Spleen (tissue), 13 donors: ENCODE measurements at regions of chr7 and their contacts with region 1.

Region 1: DNA sequence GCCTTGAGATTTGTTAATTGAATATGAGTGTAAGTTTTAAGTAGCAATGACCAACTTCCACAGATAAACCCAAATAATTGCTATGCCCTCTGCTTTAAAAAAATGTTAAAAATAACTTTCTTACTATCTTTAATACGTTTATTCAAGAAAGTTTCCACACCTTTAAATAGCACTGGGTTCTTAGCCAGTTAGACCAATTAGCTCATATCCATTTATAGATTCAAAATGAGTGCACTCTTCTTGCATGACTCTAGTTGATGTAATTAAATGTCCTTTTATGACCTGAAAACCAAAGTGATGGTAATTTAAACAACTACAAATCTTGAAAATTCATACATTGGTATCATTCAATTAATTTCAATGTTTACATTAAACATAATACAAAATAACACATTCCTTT is 50.8 kb upstream of the CACNA2D1 start:
- DNase-seq: no peak
- H3K4me3 ChIP-seq: no peak overlapping the region
- H3K27ac ChIP-seq: no peak overlapping the region
- H3K4me1 ChIP-seq: no peaks in the 10 kb centered on the region
- H3K27me3 ChIP-seq: no peaks in the 10 kb centered on the region
- CTCF ChIP-seq: no peak
- POLR2A ChIP-seq: no peak

Region 2: GRCh38 chr7:82234457-82235049 is 259.9 kb before region 1 on chr7:
- intact Hi-C with region 1: loop called (anchors 5 kb)
- DNase-seq: no peak
- H3K4me3 ChIP-seq: no peak overlapping the region
- H3K27ac ChIP-seq: no peak overlapping the region
- H3K4me1 ChIP-seq: no peaks in the 10 kb centered on the region
- H3K27me3 ChIP-seq: no peaks in the 10 kb centered on the region
- CTCF ChIP-seq: peak in 7 of 11 experiments; percentile 22 to 54 (median 38)
- POLR2A ChIP-seq: no peak